A549 (cell line): ENCODE measurements at regions of chr17 and their contacts with region 1.

Region 1: DNA sequence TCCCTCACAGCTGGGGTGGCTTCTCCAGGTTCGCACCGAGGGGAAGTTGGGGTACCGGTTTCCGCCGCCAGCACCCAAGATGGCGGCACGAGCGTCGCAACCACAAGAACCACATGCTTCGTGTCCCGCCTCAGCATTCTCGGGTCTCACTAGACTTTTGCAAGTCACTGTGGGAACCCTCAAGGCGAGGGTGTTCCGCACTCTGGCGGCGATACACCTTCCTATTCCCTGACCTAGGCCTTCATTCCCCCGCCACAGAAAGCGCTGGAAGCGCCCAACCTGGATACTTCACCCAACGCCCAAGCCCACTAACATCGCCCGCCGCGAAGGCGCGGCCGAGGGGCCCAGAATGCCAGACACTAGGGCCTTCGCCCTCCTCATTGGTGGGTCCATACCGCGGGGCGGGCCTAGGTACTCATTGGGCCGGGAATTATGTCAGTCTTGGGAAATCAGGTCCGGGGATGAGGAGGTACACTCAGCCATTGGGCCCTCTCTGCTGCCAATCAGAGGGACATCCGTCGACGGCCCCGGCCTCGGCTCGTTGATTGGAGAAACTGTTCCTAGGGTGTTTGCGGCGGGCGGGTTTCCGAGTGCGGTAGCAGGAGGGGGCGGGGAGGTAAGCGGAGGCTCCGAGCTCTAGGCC is at the start of gene NFE2L1:
- DNase-seq: peak; percentile 98 to 100
- ATAC-seq: peak; percentile 90 to 95
- H3K4me3 ChIP-seq: peak within 1 kb of the TSS; percentile 79
- H3K27ac ChIP-seq: peak within 1 kb of the TSS; percentile 95 to 99
- H3K4me1 ChIP-seq: peaks cover 52% of the 10 kb centered on the region
- CTCF ChIP-seq: no peak
- EP300 ChIP-seq: no peak
- POLR2A ChIP-seq: peak; percentile 61
- RAD21 ChIP-seq: no peak
- polyA plus RNA-seq, gene NFE2L1: 241 and 283 TPM in 2 replicates

Region 2: DNA sequence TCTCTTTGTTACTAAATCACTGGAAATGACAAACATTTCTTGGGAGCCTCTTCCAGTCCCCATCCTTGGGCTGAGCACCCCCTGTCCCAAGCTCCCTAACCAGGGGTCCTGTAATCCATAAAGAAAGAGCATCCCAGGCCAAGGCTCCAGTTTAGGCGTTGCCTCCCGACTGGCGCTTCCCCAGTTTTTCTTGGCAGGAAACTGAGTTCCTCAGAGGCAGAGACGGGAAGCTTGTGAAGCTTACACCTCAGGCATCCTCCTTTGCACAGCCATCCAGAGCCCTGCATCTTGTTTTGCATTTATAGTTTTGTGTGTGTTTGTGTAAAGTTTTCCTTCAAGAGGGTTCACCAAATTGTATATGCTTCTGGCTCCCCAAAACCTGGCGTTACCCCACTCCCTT is 17.3 kb before region 1 on chr17:
- CTCF ChIA-PET with region 1: interaction called, 1,398 read pairs
- POLR2A ChIA-PET with region 1: interaction called, 59 read pairs
- DNase-seq: no peak
- ATAC-seq: no peak
- H3K4me3 ChIP-seq: no peak overlapping the region
- H3K27ac ChIP-seq: no peak overlapping the region
- H3K4me1 ChIP-seq: peaks cover 14% of the 10 kb centered on the region
- CTCF ChIP-seq: no peak
- EP300 ChIP-seq: no peak
- POLR2A ChIP-seq: no peak
- RAD21 ChIP-seq: no peak

Region 3: DNA sequence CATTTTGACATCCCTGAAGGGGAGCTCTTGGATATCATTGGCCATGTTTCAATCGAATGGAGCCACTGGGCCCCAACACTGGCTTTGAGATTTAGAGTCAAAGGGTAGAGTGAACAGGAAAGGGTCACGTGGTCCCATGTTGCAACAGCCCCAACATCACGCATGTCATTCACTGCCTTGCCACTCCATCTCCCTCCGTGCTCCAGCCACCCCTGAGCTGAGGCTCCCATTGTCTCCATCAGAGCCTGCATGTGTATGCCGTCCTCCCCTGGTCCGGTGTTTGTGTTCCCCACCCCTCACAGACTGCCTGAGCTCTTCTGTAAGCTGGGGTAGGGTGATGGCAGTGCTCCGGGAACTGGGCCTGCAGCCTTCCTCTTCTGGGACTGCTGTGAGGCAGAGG is 12.4 kb after region 1 on chr17:
- CTCF ChIA-PET with region 1: interaction called, 1,398 read pairs
- POLR2A ChIA-PET with region 1: interaction called, 57 read pairs
- DNase-seq: no peak
- ATAC-seq: no peak
- H3K4me3 ChIP-seq: no peak overlapping the region
- H3K27ac ChIP-seq: no peak overlapping the region
- H3K4me1 ChIP-seq: peaks cover 15% of the 10 kb centered on the region
- CTCF ChIP-seq: no peak
- EP300 ChIP-seq: no peak
- POLR2A ChIP-seq: no peak
- RAD21 ChIP-seq: no peak

Region 4: DNA sequence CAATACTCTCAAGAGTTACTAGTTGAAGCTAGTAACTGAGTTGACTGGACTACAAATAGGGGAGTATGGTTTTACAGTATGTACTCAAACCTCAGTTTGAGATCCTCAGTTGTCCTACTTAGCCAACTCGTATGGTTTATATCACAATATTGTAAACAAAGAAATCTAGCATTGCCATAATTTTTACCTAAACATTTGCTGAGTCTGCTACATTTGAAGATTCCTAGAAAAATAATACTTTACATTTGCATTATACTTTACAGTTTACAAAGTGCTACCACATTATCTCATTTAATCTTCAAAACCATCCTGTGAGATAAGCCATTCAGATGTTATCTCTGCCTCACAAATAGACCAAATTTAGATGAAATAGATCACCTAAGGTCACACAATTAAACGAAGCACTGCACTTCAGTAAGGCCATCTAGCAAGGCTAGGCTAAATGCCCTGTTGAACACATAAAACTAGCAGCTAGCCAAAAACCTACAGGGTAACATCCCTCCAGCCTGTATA is 37.1 kb after region 1 on chr17:
- CTCF ChIA-PET with region 1: interaction called, 1,398 read pairs
- POLR2A ChIA-PET with region 1: interaction called, 16 read pairs
- DNase-seq: no peak
- ATAC-seq: no peak
- H3K4me3 ChIP-seq: no peak overlapping the region
- H3K27ac ChIP-seq: no peak overlapping the region
- H3K4me1 ChIP-seq: peaks cover 17% of the 10 kb centered on the region
- CTCF ChIP-seq: no peak
- EP300 ChIP-seq: no peak
- POLR2A ChIP-seq: no peak
- RAD21 ChIP-seq: no peak

Region 5: DNA sequence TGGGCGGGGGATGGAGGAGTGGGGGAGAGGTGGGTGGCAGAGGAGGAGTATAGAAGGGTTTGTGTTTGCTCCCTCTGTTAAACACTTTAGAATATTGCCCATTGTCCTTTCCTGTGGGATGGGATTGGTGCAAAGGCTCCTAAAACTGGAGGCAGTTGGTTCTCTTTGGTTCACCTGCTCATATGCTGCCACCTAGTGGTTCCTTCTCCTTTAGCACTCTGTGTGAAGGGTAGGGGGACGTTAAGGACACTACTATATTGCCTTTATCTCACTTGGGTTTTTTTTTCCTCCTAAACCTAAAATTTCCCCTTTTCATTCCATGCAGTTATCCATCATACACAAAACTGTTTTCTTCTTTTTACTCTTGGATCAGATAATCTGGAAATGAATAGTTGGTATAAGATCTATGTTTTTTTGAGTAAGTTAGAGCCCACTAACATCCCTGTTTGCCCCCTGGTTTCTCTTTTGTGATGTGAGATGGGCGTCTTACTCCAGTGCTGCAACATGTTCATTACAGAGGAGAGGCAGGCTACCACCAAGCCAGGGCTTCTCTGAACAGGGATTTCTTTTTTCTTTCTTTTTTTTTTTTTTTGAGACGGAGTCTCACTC is 83.5 kb after region 1 on chr17:
- CTCF ChIA-PET with region 1: interaction called, 7 read pairs
- POLR2A ChIA-PET with region 1: interaction called, 18 read pairs
- DNase-seq: peak; percentile 79 to 87
- ATAC-seq: peak; percentile 88 to 93
- H3K4me3 ChIP-seq: no peak overlapping the region
- H3K27ac ChIP-seq: no peak overlapping the region
- H3K4me1 ChIP-seq: peaks cover 12% of the 10 kb centered on the region
- CTCF ChIP-seq: peak; percentile 98
- EP300 ChIP-seq: no peak
- POLR2A ChIP-seq: no peak
- RAD21 ChIP-seq: peak; percentile 91 to 97

Region 6: DNA sequence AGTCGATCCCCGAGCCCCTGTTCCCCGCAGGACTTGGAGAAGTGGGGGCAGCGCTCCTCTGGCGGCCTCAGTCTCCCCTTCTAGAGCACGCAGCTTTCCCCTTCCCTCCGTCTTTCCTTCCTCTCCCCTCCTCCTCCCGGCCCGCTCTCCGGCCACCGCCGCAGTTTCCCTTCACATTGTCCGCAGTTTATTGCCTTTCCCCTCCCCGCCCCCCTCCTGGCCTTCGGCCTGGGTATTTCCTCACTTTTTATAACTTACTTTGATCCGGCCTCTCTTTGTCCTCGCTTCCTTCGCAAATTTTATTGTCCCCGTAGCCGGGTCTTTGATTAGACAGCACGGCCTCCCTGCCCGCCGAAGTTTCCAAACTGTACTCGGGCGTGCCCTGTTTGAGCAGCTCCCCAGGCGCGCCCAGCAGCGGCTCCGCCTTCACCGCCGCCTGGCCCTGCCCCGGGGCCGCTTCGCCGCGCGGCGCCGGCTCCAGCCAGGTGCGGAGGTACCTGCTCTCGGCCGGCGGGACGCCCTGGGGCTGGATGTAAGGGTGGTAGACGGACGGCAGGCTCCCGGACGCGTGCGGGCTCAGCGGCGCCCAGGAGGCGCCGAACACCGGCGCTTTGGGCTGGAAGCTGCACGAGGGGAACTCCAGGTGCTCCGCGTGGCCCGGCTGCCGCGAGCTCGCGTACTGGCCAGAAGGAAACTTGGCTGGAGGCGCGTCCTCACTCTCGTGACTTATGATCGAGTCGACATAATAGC is 577.8 kb after region 1 on chr17:
- CTCF ChIA-PET with region 1: no interaction called
- POLR2A ChIA-PET with region 1: interaction called, 12 read pairs
- DNase-seq: peak; percentile 66 to 84
- ATAC-seq: peak; percentile 66 to 82
- H3K4me3 ChIP-seq: peak overlapping the region; percentile 72
- H3K27ac ChIP-seq: peak overlapping the region; percentile 89 to 95
- H3K4me1 ChIP-seq: peaks cover 15% of the 10 kb centered on the region; the same call in 2 of the 3 replicates
- CTCF ChIP-seq: no peak
- EP300 ChIP-seq: peak in 1 of 2 experiments; percentile 9; a peak in 1 of 5 replicates
- POLR2A ChIP-seq: peak; percentile 45
- RAD21 ChIP-seq: no peak